Activated CD4-positive, alpha-beta T cell treated with anti-CD3 and anti-CD28 coated beads, Interleukin-2, amount 10 ng/mL, durations not matched to agents 7 days and 5 days (primary cell): ENCODE measurements at regions of chrX and their contacts with region 1.

Region 1: GRCh38 chrX:65677954-65678469 is 10.6 kb downstream of the MSN start:
- DNase-seq: no peak
- H3K4me3 Mint-ChIP-seq: peak overlapping the region; percentile 25
- H3K27ac Mint-ChIP-seq: peak overlapping the region; percentile 60
- H3K4me1 Mint-ChIP-seq: peaks cover 85% of the 10 kb centered on the region
- H3K27me3 Mint-ChIP-seq: no peaks in the 10 kb centered on the region

Region 2: GRCh38 chrX:65688403-65688871 is 10.4 kb after region 1 on chrX:
- CTCF ChIA-PET with region 1: interaction called, 58 read pairs
- POLR2A ChIA-PET with region 1: no interaction called
- DNase-seq: no peak
- H3K4me3 Mint-ChIP-seq: no peak overlapping the region
- H3K27ac Mint-ChIP-seq: peak overlapping the region; percentile 66
- H3K4me1 Mint-ChIP-seq: peaks cover 87% of the 10 kb centered on the region
- H3K27me3 Mint-ChIP-seq: no peaks in the 10 kb centered on the region

Region 3: GRCh38 chrX:65894133-65894532 is 216.1 kb after region 1 on chrX:
- CTCF ChIA-PET with region 1: no interaction called
- POLR2A ChIA-PET with region 1: no interaction called
- DNase-seq: no peak
- H3K4me3 Mint-ChIP-seq: no peak overlapping the region
- H3K27ac Mint-ChIP-seq: no peak overlapping the region
- H3K4me1 Mint-ChIP-seq: peaks cover 17% of the 10 kb centered on the region
- H3K27me3 Mint-ChIP-seq: no peaks in the 10 kb centered on the region